CD4-positive, alpha-beta memory T cell (primary cell): ENCODE measurements at regions of chr9 and their contacts with region 1.

Region 1: DNA sequence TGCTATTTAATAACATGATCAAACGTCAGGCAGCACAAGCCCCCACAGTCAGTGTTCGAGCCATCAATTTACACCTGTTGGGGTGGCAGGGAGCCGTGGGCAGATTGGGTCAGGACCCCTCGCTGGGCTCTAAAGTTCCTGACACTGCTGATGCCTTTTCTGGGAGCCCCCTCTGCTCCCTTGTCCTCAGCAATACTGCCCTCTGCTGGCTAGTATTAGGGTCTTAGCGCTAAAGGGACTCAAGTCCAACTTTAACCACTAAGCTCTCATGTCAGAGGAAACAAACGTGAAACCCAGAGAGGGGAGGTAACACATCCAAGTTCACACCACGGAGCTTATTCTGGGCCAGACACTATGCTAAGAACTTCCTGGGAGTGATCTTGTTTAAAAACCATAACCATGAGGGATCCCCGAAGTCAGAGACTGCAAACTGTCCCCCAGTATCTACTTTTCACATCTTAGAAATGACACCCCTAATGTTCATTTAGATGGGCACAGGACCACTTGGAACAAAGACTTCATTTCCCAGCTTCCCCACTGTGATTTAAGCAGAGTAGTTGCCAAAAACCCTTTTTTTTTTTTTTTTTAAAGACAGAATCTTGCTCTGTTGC is 20.4 kb downstream of the ANKS6 start:
- DNase-seq: peak in 3 of 5 donors; percentile 11 to 26 (median 17)
- H3K4me3 ChIP-seq: no peak overlapping the region
- H3K4me3 Mint-ChIP-seq: no peak overlapping the region
- H3K27ac ChIP-seq: no peak overlapping the region
- H3K27ac Mint-ChIP-seq: no peak overlapping the region
- H3K4me1 ChIP-seq: no peaks in the 10 kb centered on the region
- H3K4me1 Mint-ChIP-seq: peaks cover 0 to 3% (median under 1%) of the 10 kb centered on the region in 4 donors
- H3K27me3 ChIP-seq: no peaks in the 10 kb centered on the region
- H3K27me3 Mint-ChIP-seq: no peaks in the 10 kb centered on the region

Region 2: DNA sequence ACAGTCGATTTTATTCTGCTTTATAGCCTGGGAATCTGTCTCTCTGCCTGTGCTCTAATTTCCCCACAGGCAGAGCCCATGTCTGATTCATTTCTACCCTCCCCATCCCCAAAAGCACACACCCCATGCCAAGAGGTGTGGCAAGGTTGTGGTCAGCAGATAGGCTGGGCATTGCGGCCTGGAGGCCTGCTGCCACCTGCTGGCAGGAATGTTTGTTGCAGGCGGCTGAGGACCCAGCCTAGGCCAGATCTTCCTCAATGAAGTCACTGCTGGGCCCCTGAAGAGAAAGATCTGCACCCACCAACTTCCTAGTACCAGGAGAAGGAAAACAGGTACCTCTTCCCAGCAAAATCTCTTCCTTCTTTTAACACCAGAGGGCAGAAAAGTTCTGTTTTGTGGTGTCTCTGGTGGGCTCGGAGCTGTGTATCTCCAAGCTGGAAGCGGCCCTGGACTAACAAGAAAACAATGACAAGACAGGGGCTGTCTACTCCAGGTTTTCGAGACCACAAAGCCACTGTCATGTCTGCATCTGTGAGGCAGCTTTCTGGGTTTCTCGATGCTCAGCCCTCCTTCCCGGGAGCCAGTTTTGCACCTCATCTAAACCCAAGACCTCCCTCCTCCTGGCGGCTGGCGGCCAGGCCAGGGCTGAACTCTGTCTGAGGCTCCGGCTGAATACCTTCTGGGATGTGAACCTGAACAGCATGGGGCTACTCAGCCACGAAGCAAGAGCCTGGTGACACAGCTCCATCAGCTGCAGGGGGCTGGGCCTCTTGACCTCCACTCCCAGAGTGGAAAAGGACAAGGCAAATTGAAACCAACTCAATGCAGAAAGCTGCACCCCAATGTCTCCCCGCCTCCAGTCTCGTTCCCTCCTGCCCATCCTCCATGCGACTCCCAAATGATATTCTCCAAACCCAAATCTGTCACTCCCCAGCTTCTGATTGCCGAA is 15.5 kb after region 1 on chr9:
- CTCF ChIA-PET with region 1: interaction called, 23 read pairs
- POLR2A ChIA-PET with region 1: no interaction called
- intact Hi-C with region 1: no loop called
- DNase-seq: peak in 4 of 5 donors; percentile 40 to 45 (median 42)
- H3K4me3 ChIP-seq: no peak overlapping the region
- H3K4me3 Mint-ChIP-seq: no peak overlapping the region
- H3K27ac ChIP-seq: no peak overlapping the region
- H3K27ac Mint-ChIP-seq: peak overlapping the region in 2 of 7 donors; percentile 74 to 80
- H3K4me1 ChIP-seq: peaks cover 16% of the 10 kb centered on the region
- H3K4me1 Mint-ChIP-seq: peaks cover 23 to 34% (median 28%) of the 10 kb centered on the region in 4 donors
- H3K27me3 ChIP-seq: no peaks in the 10 kb centered on the region
- H3K27me3 Mint-ChIP-seq: no peaks in the 10 kb centered on the region